ENCODE measurements at regions of chr11 and their contacts with region 1.

Region 1: DNA sequence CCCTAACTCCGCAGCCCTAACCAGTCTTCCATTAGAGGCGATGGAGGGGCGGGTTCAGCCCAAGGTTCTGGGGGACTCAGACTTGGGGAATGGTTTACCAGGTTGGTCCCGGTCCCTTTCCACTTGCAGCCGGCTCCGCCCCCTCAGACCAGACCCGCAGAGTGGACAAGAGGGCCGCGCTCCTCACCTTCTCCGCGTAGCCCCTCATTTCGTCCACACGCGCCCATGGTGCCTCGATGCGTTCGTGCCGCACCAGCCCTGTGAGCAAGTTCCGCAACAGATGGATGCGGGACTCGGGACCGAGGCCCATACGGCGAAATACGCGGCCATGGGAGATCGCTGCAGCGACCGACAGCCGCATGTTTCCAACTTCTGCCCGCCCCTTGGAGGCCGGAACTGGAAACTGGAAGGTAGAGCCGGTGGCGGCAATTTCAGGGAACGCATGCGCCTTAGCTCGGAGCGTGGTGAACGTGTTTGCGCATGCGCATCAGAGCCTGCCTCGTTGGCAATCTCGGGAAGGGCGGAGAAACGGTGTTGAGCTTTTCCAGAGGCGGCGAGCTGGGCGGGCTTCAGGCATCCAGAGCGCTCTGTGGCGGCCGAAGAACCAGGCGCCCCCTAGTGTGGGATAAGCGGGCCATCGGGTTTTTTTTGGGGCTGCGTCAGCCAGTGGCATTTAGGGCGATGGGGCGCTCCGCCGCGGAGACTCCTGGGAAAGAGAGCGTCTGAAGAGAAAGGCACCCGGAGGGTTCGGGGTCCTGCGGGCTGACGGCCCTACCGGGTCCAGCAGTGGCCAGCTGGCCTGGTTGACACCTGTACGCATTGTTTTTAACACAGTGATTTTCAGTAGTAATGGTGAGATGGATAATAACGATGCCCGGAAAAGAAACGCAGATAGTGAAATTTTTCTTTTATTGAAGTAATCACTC is at the start of gene MRPL17:
- DNase-seq: peak; percentile 99
- H3K4me3 ChIP-seq: peak within 1 kb of the TSS; percentile 81 to 100 (median 96)
- H3K27ac ChIP-seq: peak within 1 kb of the TSS; percentile 90 to 96 (median 92)
- H3K4me1 ChIP-seq: peaks cover 11 to 38% (median 24%) of the 10 kb centered on the region in 6 donors
- H3K27me3 ChIP-seq: no peaks in the 10 kb centered on the region
- CTCF ChIP-seq: peak; percentile 70 to 97 (median 93)
- POLR2A ChIP-seq: peak in 2 of 3 donors; percentile 17 to 61
- total RNA-seq, gene MRPL17: 31.1 to 74.7 (median 41.1) TPM

Region 2: DNA sequence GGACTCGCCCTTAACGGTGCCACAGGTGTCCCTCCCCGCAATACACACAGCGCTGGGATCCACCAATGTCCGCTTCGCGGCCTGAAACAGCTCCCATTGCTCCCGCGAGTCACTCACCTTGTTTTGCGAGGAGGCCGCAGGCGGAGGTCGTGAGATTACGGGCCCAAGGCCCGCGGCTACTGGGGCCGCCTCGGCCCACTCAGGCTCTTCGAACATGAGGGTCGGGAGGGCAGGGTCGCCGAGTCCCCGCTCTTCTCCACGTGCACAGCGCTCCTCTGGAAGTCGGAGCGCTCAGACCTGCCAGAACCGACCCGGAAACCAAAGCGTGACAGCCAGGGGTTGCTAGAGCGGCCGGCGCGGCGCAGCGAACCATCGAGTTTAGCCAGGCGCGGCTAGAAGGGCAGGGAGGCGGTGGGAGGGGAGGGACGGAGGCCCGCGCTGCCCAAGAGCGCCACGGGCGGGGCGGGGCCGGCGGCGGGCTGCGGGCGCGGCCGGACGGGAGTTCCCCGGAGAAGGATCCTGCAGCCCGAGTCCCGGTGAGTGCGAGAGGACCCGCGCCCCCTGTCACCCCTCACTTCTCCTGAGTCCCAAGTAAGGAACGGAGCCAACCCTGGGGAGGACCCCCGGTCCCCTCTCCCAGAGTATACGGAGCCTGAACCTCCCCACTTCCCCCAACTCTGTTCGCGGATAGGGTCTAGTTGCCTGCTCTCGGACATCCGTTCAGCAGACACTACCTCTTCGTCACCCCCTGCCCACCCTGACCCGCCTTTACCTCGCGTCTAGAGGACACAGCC is 79.7 kb before region 1 on chr11 and contains the starts of genes ILK and RRP8:
- intact Hi-C with region 1: loop called (anchors 5 kb)
- DNase-seq: peak; percentile 99
- H3K4me3 ChIP-seq: peak within 1 kb of the TSS; percentile 60 to 91 (median 84)
- H3K27ac ChIP-seq: peak within 1 kb of the TSS; percentile 90 to 98 (median 94)
- H3K4me1 ChIP-seq: peaks cover 59 to 90% (median 72%) of the 10 kb centered on the region in 6 donors
- H3K27me3 ChIP-seq: no peaks in the 10 kb centered on the region
- CTCF ChIP-seq: peak in 7 of 11 experiments; percentile 30 to 56 (median 45)
- POLR2A ChIP-seq: peak in 1 of 3 donors; percentile 24
- total RNA-seq, gene ILK: 122 to 194 (median 141) TPM
- total RNA-seq, gene RRP8: 17.0 to 26.0 (median 22.7) TPM